K562 (cell line): ENCODE measurements at regions of chr3 and their contacts with region 1.

Region 1: GRCh38 chr3:17798003-17798402 is 55.6 kb upstream of the TBC1D5 start:
- DNase-seq: peak in 2 of 4 experiments; percentile 34 to 46
- ATAC-seq: peak; percentile 91
- H3K4me3 ChIP-seq: no peak overlapping the region
- H3K27ac ChIP-seq: no peak overlapping the region
- H3K4me1 ChIP-seq: no peaks in the 10 kb centered on the region
- H3K27me3 ChIP-seq: no peaks in the 10 kb centered on the region; a peak in 1 of 5 replicates
- CTCF ChIP-seq: peak; percentile 46 to 93 (median 69)
- EP300 ChIP-seq: no peak
- POLR2A ChIP-seq: no peak
- RAD21 ChIP-seq: peak in 1 of 2 experiments; percentile 61; a peak in 2 of 4 replicates

Region 2: DNA sequence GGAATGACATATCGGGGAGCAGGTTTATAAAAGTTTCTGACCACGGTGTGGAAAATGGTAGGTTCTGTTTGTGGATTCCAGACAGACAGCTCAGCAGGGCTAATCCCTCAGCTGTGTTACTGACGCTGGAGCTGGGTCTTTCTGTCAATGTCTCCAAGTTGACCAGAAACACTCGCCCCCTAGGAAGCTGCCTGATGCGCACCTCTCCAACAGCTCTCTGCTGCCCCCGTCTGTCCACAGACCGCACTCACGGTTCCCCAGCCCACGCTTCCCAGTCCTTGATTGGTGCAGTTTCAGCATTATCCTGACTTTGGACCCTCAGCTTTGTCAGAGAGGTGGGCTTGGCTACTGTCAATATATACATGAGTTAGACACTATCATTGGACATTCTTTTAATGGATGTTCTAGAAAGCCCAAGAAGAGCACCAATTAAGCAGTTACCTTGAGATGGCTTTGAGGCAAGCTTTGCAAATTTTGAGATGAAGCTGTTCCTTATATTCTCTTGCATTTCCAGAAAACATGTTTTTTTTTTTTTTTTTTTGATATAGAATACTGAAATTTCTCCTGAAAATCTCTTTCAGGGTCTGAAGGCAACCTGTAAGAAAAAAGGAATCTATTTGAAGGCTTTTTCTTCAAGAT is 43.3 kb after region 1 on chr3:
- CTCF ChIA-PET with region 1: no interaction called
- POLR2A ChIA-PET with region 1: no interaction called
- in situ Hi-C with region 1: no loop called
- intact Hi-C with region 1: loop called (anchors 1 kb)
- DNase-seq: peak; percentile 81 to 87 (median 84)
- ATAC-seq: peak; percentile 99
- H3K4me3 ChIP-seq: no peak overlapping the region
- H3K27ac ChIP-seq: no peak overlapping the region
- H3K4me1 ChIP-seq: no peaks in the 10 kb centered on the region
- H3K27me3 ChIP-seq: peaks cover 0 to 5% of the 10 kb centered on the region in 2 experiments; a peak in 3 of 5 replicates
- CTCF ChIP-seq: peak; percentile 98 to 99 (median 99)
- EP300 ChIP-seq: peak; percentile 19; the same call in 1 of the 2 replicates
- POLR2A ChIP-seq: no peak
- RAD21 ChIP-seq: peak; percentile 99

Region 3: DNA sequence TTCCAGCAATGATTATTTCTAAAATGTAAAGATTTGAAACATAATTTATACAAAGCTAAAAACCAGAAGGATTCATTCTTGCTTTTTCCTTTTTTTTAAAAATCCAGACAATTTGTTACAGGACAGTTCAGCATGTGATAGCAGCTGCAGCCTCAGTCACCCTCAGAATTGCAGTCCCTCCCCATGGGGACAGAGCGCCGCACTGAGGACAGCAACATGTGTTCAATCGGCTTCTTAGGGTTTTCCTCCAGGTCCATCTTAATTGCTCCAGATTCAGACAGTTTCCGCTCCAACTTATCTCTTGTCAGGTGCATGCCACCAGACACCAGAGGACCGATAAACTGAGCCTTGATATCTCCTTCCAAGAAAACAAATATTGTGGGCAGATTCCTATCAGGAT is 79.3 kb after region 1 on chr3:
- CTCF ChIA-PET with region 1: no interaction called
- POLR2A ChIA-PET with region 1: no interaction called
- in situ Hi-C with region 1: no loop called
- intact Hi-C with region 1: loop called (anchors 1 kb)
- DNase-seq: peak in 1 of 4 experiments; percentile 56
- ATAC-seq: peak; percentile 85
- H3K4me3 ChIP-seq: no peak overlapping the region
- H3K27ac ChIP-seq: no peak overlapping the region
- H3K4me1 ChIP-seq: peaks cover 0 to 3% of the 10 kb centered on the region in 2 experiments; a peak in 1 of 5 replicates
- H3K27me3 ChIP-seq: peaks cover 0 to 6% of the 10 kb centered on the region in 2 experiments; a peak in 2 of 5 replicates
- CTCF ChIP-seq: peak; percentile 53 to 66 (median 56)
- EP300 ChIP-seq: no peak
- POLR2A ChIP-seq: no peak
- RAD21 ChIP-seq: peak; percentile 28 to 66; a peak in 2 of 4 replicates